Activated B cell treated with CpG ODN at 0.5 μM for 24 hours (primary cell): ENCODE measurements at regions of chr15 and their contacts with region 1.

Region 1: GRCh38 chr15:59160880-59161593 is 45.6 kb upstream of the LDHAL6B start:
- DNase-seq: no peak
- ATAC-seq: no peak
- H3K4me3 Mint-ChIP-seq: no peak overlapping the region
- H3K27ac Mint-ChIP-seq: no peak overlapping the region
- H3K4me1 Mint-ChIP-seq: no peaks in the 10 kb centered on the region
- H3K27me3 Mint-ChIP-seq: no peaks in the 10 kb centered on the region
- CTCF ChIP-seq: no peak

Region 2: GRCh38 chr15:59002418-59002859 is 158.6 kb before region 1 on chr15:
- CTCF ChIA-PET with region 1: no interaction called
- POLR2A ChIA-PET with region 1: no interaction called
- intact Hi-C with region 1: no loop called
- DNase-seq: no peak
- ATAC-seq: peak; percentile 75
- H3K4me3 Mint-ChIP-seq: peak overlapping the region; percentile 29
- H3K27ac Mint-ChIP-seq: peak overlapping the region; percentile 54
- H3K4me1 Mint-ChIP-seq: peaks cover 70% of the 10 kb centered on the region
- H3K27me3 Mint-ChIP-seq: no peaks in the 10 kb centered on the region
- CTCF ChIP-seq: no peak

Region 3: GRCh38 chr15:59492389-59493377 is 331.6 kb after region 1 on chr15:
- CTCF ChIA-PET with region 1: interaction called, 10 read pairs
- POLR2A ChIA-PET with region 1: no interaction called
- intact Hi-C with region 1: loop called (anchors 1 kb)
- DNase-seq: peak; percentile 31
- ATAC-seq: peak; percentile 93
- H3K4me3 Mint-ChIP-seq: no peak overlapping the region
- H3K27ac Mint-ChIP-seq: peak overlapping the region; percentile 1
- H3K4me1 Mint-ChIP-seq: peaks cover 10% of the 10 kb centered on the region
- H3K27me3 Mint-ChIP-seq: no peaks in the 10 kb centered on the region
- CTCF ChIP-seq: peak; percentile 87